ENCODE measurements at regions of chr1 and their contacts with region 1.

Region 1: DNA sequence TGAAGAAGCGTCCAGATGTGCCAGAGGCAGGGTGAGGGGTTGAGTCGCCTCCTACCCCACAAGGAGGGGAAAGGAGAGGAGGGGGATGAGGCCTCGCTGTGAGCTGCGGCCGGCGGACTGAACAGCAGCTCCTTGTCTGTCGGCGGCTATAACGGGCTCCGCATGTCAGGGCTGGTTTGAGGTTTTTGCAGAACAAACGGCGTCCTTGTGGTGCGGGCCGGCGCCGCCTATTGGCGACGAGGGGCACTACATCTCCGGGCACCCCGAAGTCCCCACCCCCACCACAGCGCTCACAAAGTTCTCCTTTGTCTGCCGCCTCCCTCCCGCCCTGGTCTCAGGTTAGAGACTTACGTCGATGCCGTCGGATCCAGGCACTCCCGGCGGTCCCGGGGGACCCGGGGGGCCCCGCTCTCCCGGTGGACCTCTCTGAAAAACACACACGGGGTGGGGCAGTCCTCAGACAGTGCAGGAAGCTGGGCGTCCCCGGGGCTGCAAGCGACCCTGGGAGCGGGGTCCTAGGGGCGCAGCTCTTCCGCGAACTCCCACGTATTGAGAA is 1.8 kb downstream of the COL9A2 start:
- DNase-seq: peak; percentile 76 to 93
- H3K4me3 ChIP-seq: peak overlapping the region; percentile 42 to 63 (median 54)
- H3K27ac ChIP-seq: no peak overlapping the region
- H3K4me1 ChIP-seq: peaks cover 8 to 18% (median 11%) of the 10 kb centered on the region in 4 experiments
- H3K27me3 ChIP-seq: peaks cover 20 to 53% (median 45%) of the 10 kb centered on the region in 4 experiments
- CTCF ChIP-seq: peak in 2 of 3 experiments; percentile 69 to 86; a peak in 3 of 4 replicates
- EP300 ChIP-seq: no peak
- POLR2A ChIP-seq: 0 out of 3 replicates have a peak, but pooled peaks of 1 of the 2 experiments have one; percentile 37
- RAD21 ChIP-seq: peak; percentile 60 to 66

Region 2: GRCh38 chr1:40218333-40218732 is 97.0 kb before region 1 on chr1:
- CTCF ChIA-PET with region 1: no interaction called
- POLR2A ChIA-PET with region 1: no interaction called
- DNase-seq: no peak
- H3K4me3 ChIP-seq: no peak overlapping the region
- H3K27ac ChIP-seq: no peak overlapping the region
- H3K4me1 ChIP-seq: no peaks in the 10 kb centered on the region
- H3K27me3 ChIP-seq: no peaks in the 10 kb centered on the region
- CTCF ChIP-seq: no peak
- EP300 ChIP-seq: no peak
- POLR2A ChIP-seq: no peak
- RAD21 ChIP-seq: no peak

Region 3: GRCh38 chr1:40232444-40232843 is 82.9 kb before region 1 on chr1:
- CTCF ChIA-PET with region 1: no interaction called
- POLR2A ChIA-PET with region 1: no interaction called
- DNase-seq: no peak
- H3K4me3 ChIP-seq: no peak overlapping the region
- H3K27ac ChIP-seq: no peak overlapping the region
- H3K4me1 ChIP-seq: no peaks in the 10 kb centered on the region
- H3K27me3 ChIP-seq: no peaks in the 10 kb centered on the region
- CTCF ChIP-seq: no peak
- EP300 ChIP-seq: no peak
- POLR2A ChIP-seq: no peak
- RAD21 ChIP-seq: no peak

Region 4: DNA sequence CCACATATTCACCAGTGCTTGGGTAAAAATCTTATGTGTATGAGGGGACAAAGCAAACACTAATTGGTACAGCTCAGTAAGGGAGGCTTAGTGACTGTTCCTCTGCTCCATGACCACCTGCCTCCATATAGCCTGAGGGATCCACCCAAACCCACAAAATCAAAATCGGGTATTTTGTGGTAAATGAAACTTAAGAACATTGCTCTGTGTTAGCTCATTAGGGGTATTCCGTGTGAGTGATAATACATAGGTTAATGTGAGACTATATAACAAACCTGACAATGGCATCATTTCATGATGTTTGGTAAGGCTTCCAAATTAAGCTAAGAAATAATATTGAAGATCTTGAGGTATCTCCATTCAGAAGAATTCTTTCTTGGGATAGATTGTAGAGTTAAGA is 24.0 kb before region 1 on chr1:
- CTCF ChIA-PET with region 1: interaction called, 19 read pairs
- POLR2A ChIA-PET with region 1: interaction called, 8 read pairs
- DNase-seq: no peak
- H3K4me3 ChIP-seq: no peak overlapping the region
- H3K27ac ChIP-seq: no peak overlapping the region
- H3K4me1 ChIP-seq: peaks cover 0 to 6% (median 0%) of the 10 kb centered on the region in 4 experiments; a peak in 1 of 7 replicates
- H3K27me3 ChIP-seq: no peaks in the 10 kb centered on the region
- CTCF ChIP-seq: no peak
- EP300 ChIP-seq: no peak
- POLR2A ChIP-seq: no peak
- RAD21 ChIP-seq: no peak

Region 5: GRCh38 chr1:40299366-40300248 is 15.7 kb before region 1 on chr1:
- CTCF ChIA-PET with region 1: interaction called, 16 read pairs
- POLR2A ChIA-PET with region 1: interaction called, 8 read pairs
- DNase-seq: no peak
- H3K4me3 ChIP-seq: no peak overlapping the region
- H3K27ac ChIP-seq: no peak overlapping the region
- H3K4me1 ChIP-seq: peaks cover 0 to 5% (median 0%) of the 10 kb centered on the region in 4 experiments; a peak in 5 of 7 replicates
- H3K27me3 ChIP-seq: peaks cover 0 to 17% (median 8%) of the 10 kb centered on the region in 4 experiments; a peak in 4 of 7 replicates
- CTCF ChIP-seq: no peak
- EP300 ChIP-seq: no peak
- POLR2A ChIP-seq: no peak
- RAD21 ChIP-seq: no peak

Measured in H1 (cell line).